Activated naive CD4-positive, alpha-beta T cell treated with anti-CD3 and anti-CD28 coated beads for 36 hours (primary cell): ENCODE measurements at regions of chr12 and their contacts with region 1.

Region 1: DNA sequence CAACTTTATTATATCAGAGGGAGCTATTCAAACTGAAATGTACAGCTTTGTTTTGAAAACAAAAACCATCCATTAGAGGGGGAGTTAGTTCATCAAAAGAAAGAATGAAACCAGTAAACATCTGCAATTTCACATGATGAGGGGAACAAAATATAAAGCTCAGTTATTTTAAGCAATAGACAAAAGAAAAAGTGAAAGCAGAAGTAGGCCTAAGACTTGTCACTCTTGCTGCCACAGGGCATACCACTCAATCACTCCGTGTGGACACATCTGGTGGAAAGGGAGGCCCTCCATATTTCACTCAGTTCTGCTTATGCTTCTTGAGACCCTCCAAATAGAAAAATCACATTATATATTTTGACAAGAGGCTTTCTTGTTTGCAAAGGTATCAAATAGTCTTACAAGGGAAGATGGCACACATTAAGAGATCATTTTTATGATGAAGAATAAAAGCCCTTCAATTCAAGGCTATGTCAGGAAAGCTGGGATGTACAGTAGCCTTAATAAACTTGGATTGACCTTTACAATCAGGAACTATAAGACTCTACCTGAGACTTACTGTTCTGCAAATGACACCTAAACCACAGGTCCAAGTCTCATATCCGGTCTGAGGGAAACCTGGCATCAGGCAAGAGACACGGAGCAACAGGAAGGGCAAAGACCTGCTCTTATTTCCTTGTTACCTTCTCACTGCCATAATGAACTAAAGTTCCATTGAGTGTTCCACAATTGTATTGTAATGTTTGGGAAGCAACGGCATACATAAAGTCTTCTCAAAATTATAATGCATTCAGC is 222.5 kb upstream of the GRIP1 start:
- DNase-seq: no peak
- H3K4me3 Mint-ChIP-seq: no peak overlapping the region
- H3K27ac Mint-ChIP-seq: peak overlapping the region; percentile 17
- H3K4me1 Mint-ChIP-seq: peaks cover 35% of the 10 kb centered on the region
- H3K27me3 Mint-ChIP-seq: no peaks in the 10 kb centered on the region

Region 2: GRCh38 chr12:66688846-66689439 is 212.4 kb before region 1 on chr12:
- CTCF ChIA-PET with region 1: no interaction called
- intact Hi-C with region 1: no loop called
- DNase-seq: peak; percentile 50
- H3K4me3 Mint-ChIP-seq: no peak overlapping the region
- H3K27ac Mint-ChIP-seq: no peak overlapping the region
- H3K4me1 Mint-ChIP-seq: peaks cover 2% of the 10 kb centered on the region
- H3K27me3 Mint-ChIP-seq: no peaks in the 10 kb centered on the region

Region 3: GRCh38 chr12:66942741-66943465 is 41.6 kb after region 1 on chr12:
- CTCF ChIA-PET with region 1: no interaction called
- intact Hi-C with region 1: no loop called
- DNase-seq: no peak
- H3K4me3 Mint-ChIP-seq: no peak overlapping the region
- H3K27ac Mint-ChIP-seq: no peak overlapping the region
- H3K4me1 Mint-ChIP-seq: peaks cover 36% of the 10 kb centered on the region
- H3K27me3 Mint-ChIP-seq: no peaks in the 10 kb centered on the region

Region 4: DNA sequence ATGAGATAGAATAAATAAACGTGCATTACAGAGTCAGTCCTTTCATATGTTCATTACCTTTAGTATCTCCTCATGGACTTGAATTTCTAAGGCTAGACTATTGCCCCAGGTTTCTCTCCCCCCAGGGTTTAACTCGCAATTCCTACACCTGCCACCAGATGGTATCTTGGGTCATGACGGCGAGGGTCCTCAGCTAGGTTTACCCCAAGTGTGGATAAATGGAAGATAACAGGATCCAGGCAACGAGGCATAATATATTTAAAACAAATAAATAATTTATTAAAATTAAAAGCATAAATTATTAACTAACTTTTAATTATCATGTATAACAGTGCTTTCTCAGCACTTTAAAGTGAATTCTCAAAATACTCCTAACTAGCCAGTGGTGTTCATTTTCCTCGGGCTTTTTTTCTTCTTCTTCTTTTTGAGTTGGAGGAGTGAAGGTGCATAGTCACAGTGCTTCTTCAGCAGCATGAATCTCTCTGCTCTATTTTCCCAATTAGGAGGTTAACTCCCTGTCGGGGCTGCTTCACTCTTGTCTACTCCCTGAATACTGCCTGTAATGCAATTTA is 124.3 kb after region 1 on chr12:
- CTCF ChIA-PET with region 1: no interaction called
- intact Hi-C with region 1: loop called (anchors 5 kb)
- DNase-seq: peak; percentile 67
- H3K4me3 Mint-ChIP-seq: no peak overlapping the region
- H3K27ac Mint-ChIP-seq: no peak overlapping the region
- H3K4me1 Mint-ChIP-seq: peaks cover 3% of the 10 kb centered on the region
- H3K27me3 Mint-ChIP-seq: no peaks in the 10 kb centered on the region

Region 5: GRCh38 chr12:67220065-67220464 is 318.7 kb after region 1 on chr12:
- CTCF ChIA-PET with region 1: no interaction called
- intact Hi-C with region 1: loop called (anchors 2 kb)
- DNase-seq: peak; percentile 13
- H3K4me3 Mint-ChIP-seq: no peak overlapping the region
- H3K27ac Mint-ChIP-seq: no peak overlapping the region
- H3K4me1 Mint-ChIP-seq: no peaks in the 10 kb centered on the region
- H3K27me3 Mint-ChIP-seq: no peaks in the 10 kb centered on the region

Region 6: DNA sequence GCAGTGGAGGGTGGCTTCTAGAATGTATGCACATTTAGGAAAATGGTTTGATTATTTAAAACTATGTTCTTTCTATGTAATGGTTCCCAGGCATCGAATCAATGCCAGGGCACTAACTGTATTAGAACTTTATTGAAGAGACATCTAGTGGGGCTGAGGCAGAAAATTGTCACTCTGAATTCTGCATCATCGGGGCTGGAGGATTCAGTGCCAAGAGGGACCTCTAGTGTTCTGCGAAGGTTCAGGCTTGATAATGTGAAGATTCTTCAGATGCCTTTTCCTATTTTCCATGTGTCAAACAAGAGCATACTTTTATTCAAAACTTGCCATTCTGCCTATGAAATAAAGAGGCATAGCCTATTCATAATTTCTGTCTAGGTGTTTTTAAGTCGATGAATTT is 514.1 kb after region 1 on chr12:
- CTCF ChIA-PET with region 1: no interaction called
- intact Hi-C with region 1: loop called (anchors 5 kb)
- DNase-seq: peak; percentile 19
- H3K4me3 Mint-ChIP-seq: no peak overlapping the region
- H3K27ac Mint-ChIP-seq: no peak overlapping the region
- H3K4me1 Mint-ChIP-seq: no peaks in the 10 kb centered on the region
- H3K27me3 Mint-ChIP-seq: no peaks in the 10 kb centered on the region

Region 7: GRCh38 chr12:67943226-67943892 is 1042.0 kb after region 1 on chr12:
- CTCF ChIA-PET with region 1: no interaction called
- intact Hi-C with region 1: loop called (anchors 2 kb)
- DNase-seq: peak; percentile 87
- H3K4me3 Mint-ChIP-seq: no peak overlapping the region
- H3K27ac Mint-ChIP-seq: no peak overlapping the region
- H3K4me1 Mint-ChIP-seq: no peaks in the 10 kb centered on the region
- H3K27me3 Mint-ChIP-seq: peaks cover 3% of the 10 kb centered on the region